ENCODE measurements at regions of chr7 and their contacts with region 1.

Region 1: GRCh38 chr7:151759591-151760042 is 117.3 kb downstream of the PRKAG2 start:
- DNase-seq: peak; percentile 60
- H3K4me3 ChIP-seq: no peak overlapping the region
- H3K27ac ChIP-seq: no peak overlapping the region
- H3K4me1 ChIP-seq: peaks cover 31% of the 10 kb centered on the region
- H3K27me3 ChIP-seq: no peaks in the 10 kb centered on the region
- CTCF ChIP-seq: peak; percentile 79 to 97

Region 2: GRCh38 chr7:151315038-151315655 is 444.5 kb before region 1 on chr7:
- CTCF ChIA-PET with region 1: no interaction called
- dilution Hi-C with region 1: no loop called
- in situ Hi-C with region 1: no loop called
- intact Hi-C with region 1: loop called (anchors 1 kb)
- DNase-seq: peak; percentile 40
- H3K4me3 ChIP-seq: no peak overlapping the region
- H3K27ac ChIP-seq: no peak overlapping the region
- H3K4me1 ChIP-seq: no peaks in the 10 kb centered on the region
- H3K27me3 ChIP-seq: no peaks in the 10 kb centered on the region
- CTCF ChIP-seq: peak; percentile 65 to 77

Region 3: GRCh38 chr7:151368136-151368571 is 391.5 kb before region 1 on chr7:
- CTCF ChIA-PET with region 1: no interaction called
- dilution Hi-C with region 1: no loop called
- in situ Hi-C with region 1: loop called (anchors 25 kb)
- intact Hi-C with region 1: loop called (anchors 1 kb)
- DNase-seq: peak; percentile 61
- H3K4me3 ChIP-seq: no peak overlapping the region
- H3K27ac ChIP-seq: no peak overlapping the region
- H3K4me1 ChIP-seq: peaks cover 3% of the 10 kb centered on the region
- H3K27me3 ChIP-seq: no peaks in the 10 kb centered on the region
- CTCF ChIP-seq: peak; percentile 91 to 97

Region 4: DNA sequence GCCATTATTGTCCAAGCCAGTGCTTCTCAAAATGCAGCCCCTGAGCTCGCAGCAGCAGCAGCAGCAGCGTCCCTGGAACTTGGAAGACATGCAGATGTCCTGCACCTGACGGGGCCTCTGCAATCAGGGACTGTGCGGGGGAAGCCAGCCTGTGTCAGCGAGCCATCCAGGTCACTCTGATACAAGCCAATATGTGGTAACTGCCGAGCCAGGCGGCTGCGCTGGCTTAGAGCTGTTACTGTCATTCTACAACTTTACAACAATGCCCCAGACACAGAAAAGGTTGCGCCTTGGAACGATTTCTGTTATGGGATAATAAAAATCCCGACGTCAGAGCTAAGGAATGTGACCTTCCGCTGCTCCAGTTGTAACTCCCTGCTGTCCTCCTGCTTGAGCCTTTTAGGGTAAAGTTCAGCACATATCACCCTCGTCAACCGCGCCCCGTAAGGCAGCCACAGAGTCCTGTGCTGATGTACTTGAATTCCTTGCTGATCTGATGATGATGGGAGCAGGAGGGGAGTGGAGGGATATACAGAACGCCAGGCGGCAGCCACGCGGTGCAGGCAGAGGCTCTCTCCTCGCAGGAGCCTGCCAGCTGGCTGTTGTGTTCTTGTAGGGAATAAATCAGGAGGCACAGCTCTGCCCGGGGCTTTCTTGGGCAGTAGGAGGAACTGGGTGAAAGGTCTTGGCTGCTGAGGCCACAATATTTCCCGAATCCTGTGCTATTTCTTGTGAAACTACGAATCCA is 299.7 kb before region 1 on chr7:
- CTCF ChIA-PET with region 1: interaction called, 3 read pairs
- dilution Hi-C with region 1: no loop called
- in situ Hi-C with region 1: no loop called
- intact Hi-C with region 1: loop called (anchors 2 kb)
- DNase-seq: peak; percentile 68
- H3K4me3 ChIP-seq: peak overlapping the region in 2 of 3 experiments; percentile 7 to 19
- H3K27ac ChIP-seq: no peak overlapping the region
- H3K4me1 ChIP-seq: peaks cover 17% of the 10 kb centered on the region
- H3K27me3 ChIP-seq: no peaks in the 10 kb centered on the region
- CTCF ChIP-seq: peak in 1 of 2 donors; percentile 45

Region 5: DNA sequence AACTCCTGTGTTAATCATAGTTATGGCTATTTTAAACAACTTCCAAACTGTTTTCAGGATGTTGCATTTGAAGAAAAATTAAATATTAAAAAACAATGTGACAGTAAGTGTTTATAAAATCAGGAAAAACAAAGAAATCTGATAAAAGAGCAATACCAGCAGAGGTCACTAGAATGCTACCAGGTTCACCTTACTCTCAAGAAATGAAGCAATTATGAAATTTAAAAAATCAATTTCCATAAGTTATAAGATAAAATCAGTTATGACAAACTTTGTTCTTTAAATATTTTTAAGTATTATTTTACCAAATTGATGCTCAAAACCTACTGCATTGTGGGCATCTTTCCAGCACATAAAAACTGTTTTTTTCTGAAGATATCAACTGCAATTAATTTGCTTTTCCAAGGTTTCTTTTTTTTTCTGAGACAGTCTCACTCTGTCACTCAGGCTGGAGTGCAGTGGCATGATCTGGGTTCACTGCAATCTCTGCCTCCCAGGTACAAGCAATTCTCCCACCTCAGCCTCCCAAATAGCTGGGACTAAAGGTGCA is 189.2 kb before region 1 on chr7:
- CTCF ChIA-PET with region 1: no interaction called
- dilution Hi-C with region 1: no loop called
- in situ Hi-C with region 1: loop called in 1 of 2 experiments (anchors 10 kb)
- intact Hi-C with region 1: loop called (anchors 1 kb)
- DNase-seq: no peak
- H3K4me3 ChIP-seq: no peak overlapping the region
- H3K27ac ChIP-seq: no peak overlapping the region
- H3K4me1 ChIP-seq: peaks cover 10% of the 10 kb centered on the region
- H3K27me3 ChIP-seq: no peaks in the 10 kb centered on the region
- CTCF ChIP-seq: peak; percentile 41 to 47

Region 6: GRCh38 chr7:151626422-151627115 is 133.0 kb before region 1 on chr7:
- CTCF ChIA-PET with region 1: no interaction called
- dilution Hi-C with region 1: no loop called
- in situ Hi-C with region 1: loop called in 1 of 2 experiments (anchors 5 kb)
- intact Hi-C with region 1: loop called (anchors 1 kb)
- DNase-seq: peak; percentile 48
- H3K4me3 ChIP-seq: no peak overlapping the region
- H3K27ac ChIP-seq: no peak overlapping the region
- H3K4me1 ChIP-seq: peaks cover 35% of the 10 kb centered on the region
- H3K27me3 ChIP-seq: no peaks in the 10 kb centered on the region
- CTCF ChIP-seq: peak; percentile 50 to 87

Region 7: DNA sequence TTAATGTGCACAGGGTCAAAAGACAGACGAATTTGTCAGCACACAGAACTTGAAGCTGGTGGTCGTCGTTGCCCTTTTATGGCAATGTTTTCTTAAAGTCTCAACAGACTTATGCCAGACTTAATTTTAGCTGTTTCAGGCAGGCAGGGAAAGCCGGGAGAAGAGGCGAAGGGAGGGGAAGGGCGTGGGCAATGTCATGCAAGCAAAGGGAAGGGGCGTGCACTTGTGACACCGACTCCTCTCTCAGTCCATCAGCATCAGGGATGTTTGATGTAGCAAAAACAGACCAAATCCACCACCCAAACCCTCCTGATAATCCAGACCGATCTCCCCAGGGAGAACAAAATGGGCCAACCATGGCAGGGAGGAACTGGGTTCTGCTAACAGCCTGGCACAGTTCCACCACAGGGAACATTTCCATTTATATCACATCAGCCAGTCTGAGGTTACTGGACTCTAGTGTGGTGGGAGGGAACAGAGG is 121.8 kb before region 1 on chr7:
- CTCF ChIA-PET with region 1: no interaction called
- dilution Hi-C with region 1: no loop called
- in situ Hi-C with region 1: no loop called
- intact Hi-C with region 1: no loop called
- DNase-seq: no peak
- H3K4me3 ChIP-seq: no peak overlapping the region
- H3K27ac ChIP-seq: no peak overlapping the region
- H3K4me1 ChIP-seq: peaks cover 9% of the 10 kb centered on the region
- H3K27me3 ChIP-seq: no peaks in the 10 kb centered on the region
- CTCF ChIP-seq: no peak

Region 8: DNA sequence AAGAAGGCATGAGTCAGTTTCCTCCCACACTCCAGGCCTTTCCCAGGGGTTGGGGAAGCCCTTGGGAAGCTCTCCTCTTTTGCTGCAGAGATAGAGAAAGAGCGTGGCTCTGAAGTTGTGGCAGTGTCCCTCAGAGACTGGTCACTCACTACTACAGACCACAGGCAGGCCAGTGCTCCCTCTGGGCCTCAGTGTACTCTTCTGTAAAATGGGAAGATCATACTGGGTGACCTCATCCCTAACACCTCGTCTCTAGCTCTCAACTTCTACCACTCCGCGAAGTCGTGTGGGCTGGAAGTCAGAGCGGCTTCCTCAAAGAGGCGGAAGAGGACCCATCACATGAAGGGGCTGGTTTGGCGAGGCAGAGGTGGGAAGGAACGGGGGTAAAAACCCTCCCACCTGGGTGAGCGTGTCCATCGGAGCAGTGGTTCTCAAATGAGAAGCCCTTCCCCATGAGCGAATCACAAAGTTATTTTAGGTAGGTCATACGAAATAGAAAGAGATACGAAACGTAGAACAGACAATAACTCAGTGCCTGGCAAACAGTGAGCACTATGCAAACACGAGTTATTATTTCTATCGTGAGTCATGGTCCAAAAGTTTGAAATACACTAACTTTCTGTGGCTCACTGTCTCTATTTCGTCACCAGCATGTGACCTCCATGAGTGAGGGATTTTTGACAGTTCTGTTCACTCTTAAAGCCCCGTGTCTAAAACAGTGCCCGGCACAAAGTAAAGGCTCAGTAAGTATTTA is 84.6 kb after region 1 on chr7:
- CTCF ChIA-PET with region 1: no interaction called
- dilution Hi-C with region 1: no loop called
- in situ Hi-C with region 1: no loop called
- intact Hi-C with region 1: no loop called
- DNase-seq: no peak
- H3K4me3 ChIP-seq: no peak overlapping the region
- H3K27ac ChIP-seq: no peak overlapping the region
- H3K4me1 ChIP-seq: no peaks in the 10 kb centered on the region
- H3K27me3 ChIP-seq: no peaks in the 10 kb centered on the region
- CTCF ChIP-seq: no peak

Region 9: GRCh38 chr7:151897161-151897731 is 137.6 kb after region 1 on chr7:
- CTCF ChIA-PET with region 1: no interaction called
- dilution Hi-C with region 1: no loop called
- in situ Hi-C with region 1: no loop called
- intact Hi-C with region 1: no loop called
- DNase-seq: peak; percentile 11
- H3K4me3 ChIP-seq: no peak overlapping the region
- H3K27ac ChIP-seq: no peak overlapping the region
- H3K4me1 ChIP-seq: peaks cover 10% of the 10 kb centered on the region
- H3K27me3 ChIP-seq: no peaks in the 10 kb centered on the region
- CTCF ChIP-seq: peak in 1 of 2 donors; percentile 11